ENCODE measurements at regions of chr10 and their contacts with region 1.

Region 1: DNA sequence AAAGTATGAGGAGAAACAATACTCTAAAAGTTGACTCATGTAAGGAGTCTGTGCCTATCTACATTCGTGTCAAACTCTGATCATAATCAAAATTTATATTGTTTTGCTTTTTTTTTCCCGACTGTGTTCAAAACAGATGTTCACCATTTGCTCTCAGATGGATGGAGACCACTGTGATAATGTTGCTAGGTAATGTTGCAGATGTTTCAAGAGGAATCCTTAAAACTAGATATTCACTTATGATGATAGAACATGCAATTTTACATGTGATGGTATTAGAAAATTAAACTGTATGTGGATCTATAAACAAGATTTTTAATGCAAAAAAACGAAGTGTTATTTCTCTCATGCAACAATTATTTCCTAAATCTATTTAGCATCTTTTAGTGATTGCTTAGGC is 1080.1 kb downstream of the REEP3 start:
- DNase-seq: no peak
- H3K4me3 ChIP-seq: no peak overlapping the region
- H3K27ac ChIP-seq: no peak overlapping the region
- H3K4me1 ChIP-seq: no peaks in the 10 kb centered on the region
- H3K27me3 ChIP-seq: no peaks in the 10 kb centered on the region
- CTCF ChIP-seq: no peak

Region 2: GRCh38 chr10:64708884-64709681 is 107.8 kb after region 1 on chr10:
- intact Hi-C with region 1: loop called (anchors 5 kb)
- DNase-seq: no peak
- H3K4me3 ChIP-seq: no peak overlapping the region
- H3K27ac ChIP-seq: no peak overlapping the region
- H3K4me1 ChIP-seq: no peaks in the 10 kb centered on the region
- H3K27me3 ChIP-seq: no peaks in the 10 kb centered on the region
- CTCF ChIP-seq: no peak